SK-N-SH (cell line): ENCODE measurements at regions of chr4 and their contacts with region 1.

Region 1: GRCh38 chr4:146095091-146095690 is 80.3 kb upstream of the LSM6 start:
- DNase-seq: peak; percentile 17
- H3K4me3 ChIP-seq: peak overlapping the region in 1 of 2 experiments; percentile 18; a peak in 1 of 4 replicates
- H3K27ac ChIP-seq: no peak overlapping the region
- H3K4me1 ChIP-seq: no peaks in the 10 kb centered on the region
- H3K27me3 ChIP-seq: no peaks in the 10 kb centered on the region
- CTCF ChIP-seq: peak; percentile 75
- EP300 ChIP-seq: no peak
- RAD21 ChIP-seq: peak; percentile 59

Region 2: DNA sequence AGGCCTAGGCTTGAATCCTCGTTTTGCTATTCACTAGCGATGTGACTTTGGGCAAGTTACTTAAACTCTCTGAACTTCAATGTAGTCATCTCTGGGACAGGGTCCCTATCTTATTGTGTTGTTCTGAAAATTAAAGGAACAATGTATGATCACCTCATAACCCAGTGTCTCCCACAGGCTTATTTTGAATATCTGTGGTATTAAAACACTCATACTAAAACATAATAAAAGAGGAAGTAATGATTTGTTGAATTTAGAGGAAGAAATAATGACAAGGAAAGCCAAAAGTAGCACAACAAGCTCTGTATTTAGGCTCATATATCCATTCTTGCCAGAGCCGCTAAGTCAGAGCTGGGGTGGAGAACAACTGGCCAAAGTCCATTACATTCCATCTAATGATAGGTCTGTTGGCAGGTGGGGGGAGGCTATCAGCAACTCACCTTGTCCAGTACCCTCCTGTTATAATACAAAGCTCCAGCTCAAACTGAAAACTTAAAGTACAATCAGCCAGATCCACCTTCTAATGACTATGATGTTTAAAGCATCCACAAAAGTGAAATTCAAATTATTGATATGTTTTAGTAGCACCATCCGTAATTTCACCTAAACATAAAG is 15.8 kb after region 1 on chr4:
- CTCF ChIA-PET with region 1: interaction called, 11 read pairs
- POLR2A ChIA-PET with region 1: interaction called, 3 read pairs
- DNase-seq: no peak
- H3K4me3 ChIP-seq: no peak overlapping the region
- H3K27ac ChIP-seq: no peak overlapping the region
- H3K4me1 ChIP-seq: no peaks in the 10 kb centered on the region; a peak in 1 of 4 replicates
- H3K27me3 ChIP-seq: no peaks in the 10 kb centered on the region
- CTCF ChIP-seq: no peak
- EP300 ChIP-seq: no peak
- RAD21 ChIP-seq: no peak

Region 3: DNA sequence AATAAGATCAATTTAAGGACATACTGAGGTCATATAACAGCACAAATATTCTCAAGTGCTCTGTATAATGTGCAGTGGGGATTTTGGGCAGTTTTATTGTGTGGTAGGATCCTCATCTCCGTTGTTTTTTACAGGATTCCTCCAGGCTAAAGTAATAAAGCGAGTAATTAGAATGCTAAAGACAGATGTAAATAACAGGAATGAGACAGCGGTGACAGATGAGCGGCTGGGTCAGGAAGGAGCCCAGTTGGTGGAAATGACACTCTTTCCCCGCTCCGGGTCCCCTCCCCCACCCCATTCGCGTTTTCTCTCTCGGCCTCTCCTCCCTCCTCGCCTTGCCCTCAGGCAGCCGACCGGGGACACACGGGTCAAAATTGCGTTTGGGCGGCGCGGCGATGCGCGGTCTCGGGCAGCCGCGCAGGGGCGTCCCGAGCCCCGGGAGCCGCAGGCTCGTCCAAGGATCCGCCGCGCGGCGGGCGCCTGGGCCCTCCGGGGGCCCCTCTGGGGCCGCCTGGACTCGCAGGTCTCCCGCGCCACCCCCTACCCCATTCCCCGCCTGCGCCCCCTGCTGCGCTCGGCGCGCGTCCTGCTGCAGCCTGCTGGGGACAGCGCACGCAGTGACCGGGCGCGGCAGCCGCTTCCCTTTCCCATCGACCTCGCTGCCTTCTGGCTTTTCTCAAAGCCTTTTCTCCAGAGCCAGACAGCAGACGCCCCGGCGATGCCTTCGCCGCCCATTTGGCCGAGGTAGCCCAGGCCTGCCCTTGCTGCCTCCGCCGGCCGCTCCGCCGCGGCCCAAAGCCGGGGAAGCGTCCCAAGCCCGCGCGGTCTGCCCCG is 559.7 kb after region 1 on chr4:
- CTCF ChIA-PET with region 1: no interaction called
- POLR2A ChIA-PET with region 1: no interaction called
- DNase-seq: peak; percentile 84
- H3K4me3 ChIP-seq: peak overlapping the region; percentile 39 to 60
- H3K27ac ChIP-seq: no peak overlapping the region
- H3K4me1 ChIP-seq: no peaks in the 10 kb centered on the region; a peak in 2 of 4 replicates
- H3K27me3 ChIP-seq: peaks cover 15% of the 10 kb centered on the region; the same call in 1 of the 2 replicates
- CTCF ChIP-seq: peak; percentile 18; the same call in 1 of the 2 replicates
- EP300 ChIP-seq: no peak
- RAD21 ChIP-seq: no peak; the same call in 1 of the 2 replicates